Psoas muscle (tissue), 8 donors: ENCODE measurements at regions of chr11 and their contacts with region 1.

Region 1: DNA sequence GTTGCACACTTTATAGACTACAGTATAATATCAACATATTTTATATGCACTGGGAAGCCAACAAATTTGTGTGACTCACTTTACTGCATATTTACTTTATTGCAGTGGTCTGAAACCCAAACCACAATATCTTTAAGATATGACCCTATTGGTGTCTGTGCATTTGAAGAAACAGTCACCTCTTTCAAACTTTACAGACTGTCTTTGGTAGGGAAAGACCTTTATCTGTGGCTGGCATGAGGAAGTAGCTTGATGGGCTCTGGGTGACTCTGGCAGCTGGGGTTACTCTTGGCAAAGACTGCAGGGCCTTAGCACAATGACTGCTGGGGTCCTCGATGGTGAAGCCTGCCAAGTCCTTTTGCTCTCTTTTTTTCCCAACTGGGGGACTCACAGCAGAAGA is 21.3 kb upstream of the ABTB2 start:
- DNase-seq: no peak
- ATAC-seq: no peak
- H3K4me3 ChIP-seq: no peak overlapping the region
- H3K27ac ChIP-seq: no peak overlapping the region
- H3K4me1 ChIP-seq: no peaks in the 10 kb centered on the region
- H3K27me3 ChIP-seq: no peaks in the 10 kb centered on the region
- CTCF ChIP-seq: no peak

Region 2: DNA sequence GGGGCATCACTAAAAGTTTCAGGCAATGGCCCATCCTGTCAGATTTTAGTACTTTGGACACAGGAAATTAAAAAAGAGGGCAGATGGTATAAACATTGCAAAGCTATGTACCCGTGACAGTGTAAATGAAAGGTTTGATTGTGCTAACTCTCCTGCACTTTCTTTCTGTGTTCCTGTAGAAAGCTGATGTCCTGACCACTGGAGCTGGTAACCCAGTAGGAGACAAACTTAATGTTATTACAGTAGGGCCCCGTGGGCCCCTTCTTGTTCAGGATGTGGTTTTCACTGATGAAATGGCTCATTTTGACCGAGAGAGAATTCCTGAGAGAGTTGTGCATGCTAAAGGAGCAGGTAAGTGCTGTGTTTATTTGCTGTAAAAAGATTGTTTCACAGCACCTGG is 69.9 kb after region 1 on chr11:
- intact Hi-C with region 1: no loop called
- DNase-seq: no peak
- ATAC-seq: no peak
- H3K4me3 ChIP-seq: no peak overlapping the region
- H3K27ac ChIP-seq: peak overlapping the region; percentile 65
- H3K4me1 ChIP-seq: peaks cover 44% of the 10 kb centered on the region
- H3K27me3 ChIP-seq: no peaks in the 10 kb centered on the region
- CTCF ChIP-seq: no peak

Region 3: GRCh38 chr11:34473606-34474169 is 94.6 kb after region 1 on chr11:
- intact Hi-C with region 1: loop called in 1 of 2 experiments (anchors 5 kb)
- DNase-seq: no peak
- ATAC-seq: no peak
- H3K4me3 ChIP-seq: no peak overlapping the region
- H3K27ac ChIP-seq: peak overlapping the region; percentile 68
- H3K4me1 ChIP-seq: peaks cover 13% of the 10 kb centered on the region
- H3K27me3 ChIP-seq: no peaks in the 10 kb centered on the region
- CTCF ChIP-seq: no peak

Region 4: DNA sequence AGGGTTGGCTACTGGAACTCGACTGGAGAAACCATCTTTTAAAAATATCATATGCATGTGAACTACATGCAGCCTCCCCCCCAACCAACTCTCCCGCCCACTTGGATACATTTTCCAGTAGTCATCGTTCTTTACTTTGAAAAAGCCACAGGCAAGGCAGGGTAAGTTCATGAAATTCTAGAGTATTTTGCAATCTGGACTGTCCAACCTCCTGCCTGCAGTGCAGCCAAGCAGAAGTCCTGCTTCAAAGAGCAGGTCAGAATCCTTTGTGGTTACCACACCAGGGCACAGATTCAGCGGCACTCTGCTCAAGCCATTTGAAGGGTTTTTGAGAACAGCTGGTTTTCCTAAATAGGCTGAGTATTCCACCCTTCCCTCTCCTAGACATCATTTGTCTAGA is 122.4 kb after region 1 on chr11:
- intact Hi-C with region 1: no loop called
- DNase-seq: peak in 1 of 2 donors; percentile 49
- ATAC-seq: peak in 3 of 4 donors; percentile 50 to 69 (median 55)
- H3K4me3 ChIP-seq: no peak overlapping the region
- H3K27ac ChIP-seq: no peak overlapping the region
- H3K4me1 ChIP-seq: no peaks in the 10 kb centered on the region
- H3K27me3 ChIP-seq: no peaks in the 10 kb centered on the region
- CTCF ChIP-seq: no peak